ENCODE measurements at regions of chr16 and their contacts with region 1.

Region 1: DNA sequence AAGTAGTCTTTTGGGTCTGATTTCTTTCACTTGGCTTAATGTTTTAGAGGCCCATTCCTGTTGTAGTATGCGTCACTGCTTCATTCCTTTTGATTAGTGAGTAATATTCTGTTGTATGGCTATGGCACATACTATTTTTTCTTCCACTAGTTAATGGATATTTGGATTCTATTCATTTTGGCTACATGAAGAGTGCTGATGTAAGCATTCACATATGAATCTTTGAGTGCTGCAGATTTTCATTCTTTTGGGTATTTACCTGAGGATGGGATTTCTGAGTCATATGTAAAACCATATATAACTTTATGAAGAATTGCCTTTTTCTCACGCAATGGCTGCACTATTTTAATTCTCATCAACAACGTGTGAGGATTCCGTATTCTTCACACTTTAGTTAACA is 113.6 kb downstream of the AHSP start:
- DNase-seq: no peak
- ATAC-seq: no peak
- H3K4me3 ChIP-seq: no peak overlapping the region
- H3K27ac ChIP-seq: no peak overlapping the region
- H3K4me1 ChIP-seq: no peaks in the 10 kb centered on the region
- H3K27me3 ChIP-seq: no peaks in the 10 kb centered on the region
- CTCF ChIP-seq: no peak

Region 2: DNA sequence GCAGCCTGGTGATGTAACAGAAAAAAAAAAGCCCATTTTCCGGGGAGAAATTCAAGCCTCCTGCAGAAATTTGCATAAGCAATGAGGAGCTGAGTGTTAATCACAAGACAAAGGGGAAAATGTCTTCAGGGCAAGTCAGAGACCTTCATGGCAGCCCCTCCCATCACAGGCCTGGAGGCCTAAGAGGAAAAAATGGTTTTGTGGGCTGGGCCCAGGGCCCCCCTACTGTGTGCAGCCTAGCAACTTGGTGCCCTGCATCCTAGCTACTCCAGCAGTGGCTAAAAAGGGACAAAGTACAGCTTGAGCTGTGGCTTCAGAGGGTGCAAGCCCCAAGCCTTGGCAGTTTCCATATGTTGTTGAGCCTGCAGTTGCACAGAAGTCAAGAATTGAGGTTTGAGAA is 63.9 kb before region 1 on chr16:
- intact Hi-C with region 1: loop called (anchors 10 kb)
- DNase-seq: no peak
- ATAC-seq: no peak
- H3K4me3 ChIP-seq: no peak overlapping the region
- H3K27ac ChIP-seq: no peak overlapping the region
- H3K4me1 ChIP-seq: no peaks in the 10 kb centered on the region
- H3K27me3 ChIP-seq: no peaks in the 10 kb centered on the region
- CTCF ChIP-seq: no peak

Measured in upper lobe of right lung (tissue), 1 donor.